ENCODE measurements at regions of chr6 and their contacts with region 1.

Region 1: GRCh38 chr6:28104392-28105244 is 19.8 kb upstream of the ZSCAN16 start:
- DNase-seq: peak; percentile 90
- ATAC-seq: peak; percentile 98

Region 2: GRCh38 chr6:28080631-28081485 is 23.8 kb before region 1 on chr6:
- intact Hi-C with region 1: loop called (anchors 1 kb)
- DNase-seq: peak; percentile 95
- ATAC-seq: peak; percentile 99

Region 3: DNA sequence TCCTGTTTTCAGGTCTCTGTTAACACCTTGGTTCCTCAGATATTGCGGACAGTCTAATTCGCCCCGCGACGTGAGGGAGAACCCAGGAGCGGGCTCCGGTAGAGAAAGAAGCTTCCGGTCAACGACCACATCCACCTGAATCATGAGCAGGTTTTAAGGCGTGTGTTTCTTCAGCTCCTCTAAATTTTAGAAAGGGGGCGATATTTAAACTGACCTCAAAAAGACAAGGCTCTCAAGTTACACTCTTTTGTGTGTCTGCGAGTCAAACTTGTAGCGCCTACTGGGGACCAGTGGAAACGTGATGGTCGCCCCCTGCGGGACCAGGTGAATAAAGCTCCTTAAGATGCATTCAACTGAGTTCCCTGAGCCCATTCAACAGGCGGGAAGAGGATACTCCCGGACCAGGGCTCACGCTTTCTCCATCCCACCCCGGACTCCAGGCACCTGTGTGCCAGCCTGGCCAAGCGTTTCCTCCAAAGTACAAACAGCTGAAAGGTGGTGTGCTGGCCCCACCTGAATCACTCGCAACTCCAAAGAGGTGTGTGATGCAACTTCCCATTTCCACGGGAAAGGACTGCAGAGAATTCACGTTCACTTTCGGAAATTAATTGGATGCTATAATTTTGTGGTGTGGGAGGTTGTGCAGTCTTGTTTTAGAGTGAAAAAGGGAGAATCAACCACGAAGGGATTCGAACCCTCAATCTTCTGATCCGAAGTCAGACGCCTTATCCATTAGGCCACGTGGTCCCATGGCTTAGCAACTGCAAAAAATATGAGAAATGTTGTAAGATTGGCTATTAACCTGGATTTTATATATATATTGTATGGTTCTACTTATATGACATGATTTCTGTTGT is 438.1 kb after region 1 on chr6:
- intact Hi-C with region 1: no loop called
- DNase-seq: no peak
- ATAC-seq: peak; percentile 28